Lower leg skin (tissue), 4 donors: ENCODE measurements at regions of chr1 and their contacts with region 1.

Region 1: DNA sequence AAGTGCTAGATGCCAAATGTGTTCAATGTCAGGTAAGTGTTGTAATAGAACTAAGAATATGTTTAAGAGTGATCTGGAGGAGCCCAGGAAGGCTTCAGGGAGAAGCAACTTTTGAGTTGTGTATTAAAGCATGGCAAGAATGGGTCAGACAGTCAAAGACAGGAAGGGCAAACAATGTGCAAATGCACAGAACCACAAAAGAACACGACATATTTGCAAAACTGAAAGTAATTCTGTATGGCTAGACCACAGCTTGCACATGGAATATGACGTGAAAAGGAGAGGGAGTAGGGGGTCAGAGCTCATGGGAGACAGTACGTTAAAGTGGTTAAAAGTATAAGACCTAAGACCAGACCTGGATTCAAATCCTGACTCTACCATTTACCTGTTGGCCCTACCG is 7.1 kb upstream of the SORT1 start:
- DNase-seq: no peak
- H3K4me3 ChIP-seq: no peak overlapping the region
- CTCF ChIP-seq: no peak
- POLR2A ChIP-seq: no peak

Region 2: GRCh38 chr1:109208836-109209463 is 195.9 kb before region 1 on chr1:
- intact Hi-C with region 1: no loop called
- DNase-seq: no peak
- H3K4me3 ChIP-seq: no peak overlapping the region
- CTCF ChIP-seq: no peak
- POLR2A ChIP-seq: no peak

Region 3: DNA sequence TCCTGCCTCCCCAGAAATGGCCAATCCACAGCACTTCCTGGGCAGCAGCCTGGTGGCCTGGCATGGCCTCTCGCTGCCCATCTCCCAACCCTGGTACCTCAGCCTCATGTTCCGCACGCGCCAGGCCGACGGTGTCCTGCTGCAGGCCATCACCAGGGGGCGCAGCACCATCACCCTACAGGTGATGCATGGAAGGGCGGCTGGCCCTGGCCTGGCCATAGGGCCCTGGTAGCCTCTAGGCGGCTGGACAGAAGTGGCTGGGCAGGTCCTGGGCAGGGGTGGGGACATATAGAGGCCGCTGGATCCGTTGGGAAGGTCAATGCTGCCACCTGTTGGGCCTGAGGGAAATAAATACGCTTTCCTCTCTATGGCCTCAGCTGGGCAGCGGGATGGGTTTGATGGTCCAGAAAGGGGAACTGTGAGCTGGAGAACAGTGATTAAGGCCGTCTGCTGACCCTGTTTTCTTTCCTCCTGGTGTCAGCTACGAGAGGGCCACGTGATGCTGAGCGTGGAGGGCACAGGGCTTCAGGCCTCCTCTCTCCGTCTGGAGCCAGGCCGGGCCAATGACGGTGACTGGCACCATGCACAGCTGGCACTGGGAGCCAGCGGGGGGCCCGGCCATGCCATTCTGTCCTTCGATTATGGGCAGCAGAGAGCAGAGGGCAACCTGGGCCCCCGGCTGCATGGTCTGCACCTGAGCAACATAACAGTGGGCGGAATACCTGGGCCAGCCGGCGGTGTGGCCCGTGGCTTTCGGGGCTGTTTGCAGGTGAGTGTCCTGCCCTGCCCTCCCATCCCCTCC is 141.0 kb before region 1 on chr1:
- intact Hi-C with region 1: loop called (anchors 5 kb)
- DNase-seq: peak; percentile 73 to 96
- H3K4me3 ChIP-seq: no peak overlapping the region
- CTCF ChIP-seq: peak in 1 of 3 donors; percentile 97
- POLR2A ChIP-seq: no peak

Region 4: DNA sequence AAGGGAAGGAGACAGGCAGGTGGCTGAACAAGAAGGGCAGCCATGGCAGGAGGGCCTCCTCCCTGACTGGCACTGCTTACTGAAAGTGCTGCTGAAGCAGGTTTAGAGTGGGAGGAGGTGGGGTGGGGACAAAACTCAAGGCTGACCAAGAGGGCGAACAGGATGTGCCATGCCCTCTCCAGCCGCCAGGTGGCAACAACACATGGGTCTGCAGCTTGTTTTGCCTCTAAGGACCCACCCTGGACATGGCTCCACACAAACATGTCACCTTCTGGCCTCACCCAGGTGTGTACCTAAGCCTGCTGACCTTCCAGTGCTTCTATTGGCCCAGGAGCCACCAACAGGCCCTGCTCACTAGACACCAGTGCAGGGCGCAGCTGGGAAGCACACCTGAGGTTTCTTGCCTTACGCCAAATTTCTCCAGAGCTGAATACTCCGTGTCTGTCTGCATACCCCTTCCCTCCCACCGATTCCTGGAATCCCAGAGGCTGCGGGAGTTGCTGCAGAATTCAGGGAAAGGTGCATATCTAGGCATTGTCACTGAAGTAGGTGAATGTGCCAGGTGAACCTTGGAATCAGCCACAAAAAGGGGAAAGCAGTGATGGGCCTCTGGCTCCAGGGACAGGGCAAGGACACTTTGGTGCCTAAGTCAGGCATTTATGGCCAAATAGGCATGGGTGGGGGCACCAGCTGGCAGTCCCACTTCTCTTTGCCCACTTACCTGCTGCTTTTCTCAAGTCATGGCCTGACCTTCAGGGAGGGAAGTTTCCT is 127.2 kb before region 1 on chr1:
- intact Hi-C with region 1: loop called (anchors 5 kb)
- DNase-seq: peak in 1 of 2 donors; percentile 72
- H3K4me3 ChIP-seq: no peak overlapping the region
- CTCF ChIP-seq: peak in 1 of 3 donors; percentile 76
- POLR2A ChIP-seq: no peak